ENCODE measurements at regions of chr14 and their contacts with region 1.

Region 1: DNA sequence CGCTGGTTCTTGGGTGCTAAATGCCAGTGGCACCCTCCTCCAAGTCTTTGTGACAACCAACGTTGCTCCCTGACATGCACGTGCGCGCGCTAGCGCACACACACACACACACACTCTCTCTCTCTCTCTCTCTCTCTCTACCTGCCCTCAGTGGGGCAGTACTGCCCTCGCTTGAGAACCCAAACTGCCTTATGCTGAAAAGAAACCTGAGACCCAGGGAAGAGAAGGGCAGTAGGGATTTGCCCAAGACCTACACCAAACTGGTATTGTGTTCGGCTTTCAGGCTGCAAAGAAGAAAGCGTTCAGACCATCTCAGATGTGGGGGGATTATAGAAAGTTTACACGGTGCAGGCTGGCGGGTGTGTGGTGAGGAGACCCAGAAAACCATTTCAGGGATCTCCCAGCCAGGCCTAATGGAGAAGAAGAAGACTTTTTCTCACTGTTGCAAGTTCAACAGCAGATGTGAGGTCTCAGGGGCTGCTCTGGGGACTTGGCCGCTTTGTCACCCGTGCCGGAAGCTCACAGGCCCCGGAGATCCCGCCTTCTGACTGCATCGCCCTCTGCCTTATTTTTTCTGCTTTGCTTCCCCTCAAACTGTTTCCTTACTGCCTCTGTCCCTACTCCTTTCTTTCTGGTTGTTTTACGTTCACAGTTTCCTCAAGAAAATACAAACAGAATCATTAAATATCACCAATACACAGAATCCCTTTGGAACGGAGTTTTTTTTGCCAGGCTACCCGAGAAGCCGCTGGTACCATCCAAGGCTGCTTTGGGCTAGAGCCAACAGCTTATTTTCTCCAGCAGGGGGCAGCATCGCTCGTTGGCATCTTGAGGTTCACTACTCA is 82.4 kb downstream of the PPM1A start:
- DNase-seq: peak; percentile 54
- ATAC-seq: peak; percentile 94
- H3K4me3 ChIP-seq: peak overlapping the region; percentile 52 to 72 (median 62)
- H3K27ac ChIP-seq: no peak overlapping the region
- H3K4me1 ChIP-seq: 0 out of 2 replicates have a peak, but pooled peaks cover 8% of the 10 kb centered on the region
- H3K27me3 ChIP-seq: no peaks in the 10 kb centered on the region; a peak in 1 of 5 replicates
- CTCF ChIP-seq: peak; percentile 84
- EP300 ChIP-seq: no peak
- POLR2A ChIP-seq: no peak
- RAD21 ChIP-seq: peak; percentile 40; the same call in 1 of the 2 replicates

Region 2: GRCh38 chr14:60235440-60235839 is 96.0 kb before region 1 on chr14:
- CTCF ChIA-PET with region 1: no interaction called
- POLR2A ChIA-PET with region 1: no interaction called
- in situ Hi-C with region 1: no loop called
- intact Hi-C with region 1: no loop called
- DNase-seq: no peak
- ATAC-seq: no peak
- H3K4me3 ChIP-seq: no peak overlapping the region
- H3K27ac ChIP-seq: no peak overlapping the region
- H3K4me1 ChIP-seq: peaks cover 29% of the 10 kb centered on the region
- H3K27me3 ChIP-seq: 0 out of 5 replicates have a peak, but pooled peaks cover 0 to 1% of the 10 kb centered on the region in 2 experiments
- CTCF ChIP-seq: no peak
- EP300 ChIP-seq: no peak
- POLR2A ChIP-seq: no peak
- RAD21 ChIP-seq: no peak

Region 3: GRCh38 chr14:60266021-60266937 is 65.1 kb before region 1 on chr14:
- CTCF ChIA-PET with region 1: interaction called, 3 read pairs
- POLR2A ChIA-PET with region 1: no interaction called
- in situ Hi-C with region 1: no loop called
- intact Hi-C with region 1: loop called (anchors 1 kb)
- DNase-seq: peak; percentile 27
- ATAC-seq: peak; percentile 58; the same call in 2 of the 3 replicates
- H3K4me3 ChIP-seq: no peak overlapping the region
- H3K27ac ChIP-seq: no peak overlapping the region
- H3K4me1 ChIP-seq: peaks cover 9% of the 10 kb centered on the region; the same call in 1 of the 2 replicates
- H3K27me3 ChIP-seq: no peaks in the 10 kb centered on the region
- CTCF ChIP-seq: peak; percentile 57
- EP300 ChIP-seq: no peak
- POLR2A ChIP-seq: no peak
- RAD21 ChIP-seq: no peak

Measured in HepG2 (cell line).